MCF 10A (cell line): ENCODE measurements at regions of chr5 and their contacts with region 1.

Region 1: GRCh38 chr5:40879163-40879942 is 29.9 kb upstream of the C7 start:
- DNase-seq: peak; percentile 38
- H3K4me3 Mint-ChIP-seq: no peak overlapping the region
- H3K27ac Mint-ChIP-seq: no peak overlapping the region
- H3K4me1 Mint-ChIP-seq: no peaks in the 10 kb centered on the region
- H3K27me3 Mint-ChIP-seq: no peaks in the 10 kb centered on the region
- CTCF ChIP-seq: peak; percentile 37

Region 2: DNA sequence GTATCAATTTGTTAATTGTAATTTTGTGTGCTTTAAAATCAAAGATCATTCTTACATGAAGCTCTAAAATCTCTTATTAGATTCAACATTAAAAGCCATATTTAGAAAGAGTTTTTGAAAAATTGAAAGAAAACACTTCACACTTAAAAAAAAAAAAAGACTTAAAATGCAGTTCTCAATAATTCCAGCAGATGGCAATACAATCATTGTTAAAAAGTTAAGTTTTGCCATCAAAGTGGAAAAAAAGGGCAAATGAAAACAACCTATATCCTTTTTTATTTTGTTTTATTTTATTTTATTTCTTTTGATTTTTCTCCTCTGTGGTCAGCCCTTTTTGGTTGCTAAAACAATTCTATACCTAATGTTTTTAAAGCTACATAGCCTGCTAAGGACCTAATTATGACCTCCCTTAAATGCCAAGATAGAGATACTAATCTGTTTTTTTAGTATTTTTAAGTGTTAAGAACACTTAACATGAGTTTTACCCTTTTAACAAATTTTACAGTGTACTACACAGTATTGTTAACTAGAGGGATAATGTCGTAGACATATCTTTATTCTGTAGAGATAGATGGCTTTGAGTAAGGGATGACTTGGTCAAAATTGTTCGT is 1300.4 kb before region 1 on chr5:
- CTCF ChIA-PET with region 1: interaction called, 3 read pairs
- POLR2A ChIA-PET with region 1: no interaction called
- intact Hi-C with region 1: loop called (anchors 2 kb)
- DNase-seq: peak; percentile 13
- H3K4me3 Mint-ChIP-seq: no peak overlapping the region
- H3K27ac Mint-ChIP-seq: no peak overlapping the region
- H3K4me1 Mint-ChIP-seq: peaks cover 5% of the 10 kb centered on the region
- H3K27me3 Mint-ChIP-seq: no peaks in the 10 kb centered on the region
- CTCF ChIP-seq: peak; percentile 54

Region 3: GRCh38 chr5:39699161-39699560 is 1180.2 kb before region 1 on chr5:
- CTCF ChIA-PET with region 1: no interaction called
- POLR2A ChIA-PET with region 1: no interaction called
- intact Hi-C with region 1: no loop called
- DNase-seq: no peak
- H3K4me3 Mint-ChIP-seq: no peak overlapping the region
- H3K27ac Mint-ChIP-seq: no peak overlapping the region
- H3K4me1 Mint-ChIP-seq: no peaks in the 10 kb centered on the region
- H3K27me3 Mint-ChIP-seq: no peaks in the 10 kb centered on the region
- CTCF ChIP-seq: no peak

Region 4: DNA sequence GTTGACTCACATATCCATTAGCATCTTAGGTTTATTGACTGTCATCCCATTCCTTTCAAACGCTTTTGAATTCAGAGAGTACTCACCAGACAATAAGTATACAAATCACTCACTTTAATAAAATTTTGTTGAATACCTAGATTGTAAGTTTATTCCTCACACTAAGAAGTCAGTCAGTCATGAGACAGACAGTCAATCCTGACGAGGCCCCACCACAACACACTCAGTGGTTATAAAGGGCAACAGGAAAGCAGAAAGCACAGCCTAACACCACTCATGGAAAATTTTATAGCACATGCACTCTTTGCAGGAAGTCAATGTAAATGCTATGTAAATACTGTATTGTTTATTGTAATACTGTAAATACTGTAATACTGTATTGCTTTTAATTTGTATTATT is 375.9 kb before region 1 on chr5:
- CTCF ChIA-PET with region 1: no interaction called
- POLR2A ChIA-PET with region 1: no interaction called
- intact Hi-C with region 1: no loop called
- DNase-seq: no peak
- H3K4me3 Mint-ChIP-seq: no peak overlapping the region
- H3K27ac Mint-ChIP-seq: no peak overlapping the region
- H3K4me1 Mint-ChIP-seq: no peaks in the 10 kb centered on the region
- H3K27me3 Mint-ChIP-seq: no peaks in the 10 kb centered on the region
- CTCF ChIP-seq: no peak